ENCODE measurements at regions of chr2 and their contacts with region 1.

Region 1: GRCh38 chr2:84865181-84865783 is 15.6 kb downstream of the TRABD2A start:
- DNase-seq: peak in 5 of 9 donors; percentile 43 to 67 (median 53)
- ATAC-seq: peak; percentile 72
- H3K4me3 ChIP-seq: no peak overlapping the region
- H3K4me3 Mint-ChIP-seq: peak overlapping the region; percentile 32 to 89 (median 74)
- H3K27ac ChIP-seq: peak overlapping the region; percentile 73
- H3K27ac Mint-ChIP-seq: peak overlapping the region; percentile 70 to 99 (median 96)
- H3K4me1 ChIP-seq: peaks cover 12 to 74% of the 10 kb centered on the region in 2 donors
- H3K4me1 Mint-ChIP-seq: peaks cover 51 to 97% (median 91%) of the 10 kb centered on the region in 7 donors
- H3K27me3 ChIP-seq: no peaks in the 10 kb centered on the region
- H3K27me3 Mint-ChIP-seq: no peaks in the 10 kb centered on the region

Region 2: DNA sequence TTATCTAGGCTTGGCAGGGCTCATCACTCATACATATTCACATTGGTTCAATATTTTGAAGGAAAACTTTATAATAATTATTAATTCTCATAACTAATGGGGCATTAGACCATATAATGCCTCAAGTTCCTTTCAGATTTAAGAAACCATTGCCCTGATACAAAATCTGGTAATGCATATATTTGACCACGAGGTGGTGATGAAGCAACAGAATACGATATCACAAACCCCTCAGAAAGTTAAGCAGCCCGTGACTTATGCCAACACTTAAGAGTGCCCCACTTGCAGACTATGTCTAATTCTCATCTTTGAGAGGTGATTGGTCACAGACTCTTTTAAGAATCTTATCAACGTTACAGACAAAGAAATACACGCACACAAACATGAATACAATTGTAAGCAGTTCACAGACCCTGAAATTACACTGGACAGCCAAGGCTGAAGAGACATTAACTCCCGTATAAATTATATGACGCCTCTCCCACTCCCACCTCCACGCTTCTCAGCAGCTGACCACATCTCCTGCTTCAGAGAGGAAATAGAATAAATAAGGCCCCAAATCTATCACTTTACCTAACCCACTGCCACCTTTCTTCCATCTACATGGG is 369.6 kb before region 1 on chr2:
- CTCF ChIA-PET with region 1: interaction called, 5 read pairs
- POLR2A ChIA-PET with region 1: interaction called, 9 read pairs
- intact Hi-C with region 1: loop called (anchors 1 kb)
- DNase-seq: peak in 7 of 9 donors; percentile 61 to 81 (median 73)
- ATAC-seq: peak; percentile 96
- H3K4me3 ChIP-seq: no peak overlapping the region
- H3K4me3 Mint-ChIP-seq: peak overlapping the region in 1 of 10 donors; percentile 23
- H3K27ac ChIP-seq: no peak overlapping the region
- H3K27ac Mint-ChIP-seq: peak overlapping the region in 7 of 9 donors; percentile 35 to 82 (median 76)
- H3K4me1 ChIP-seq: peaks cover 0 to 5% of the 10 kb centered on the region in 2 donors
- H3K4me1 Mint-ChIP-seq: peaks cover 9 to 31% (median 28%) of the 10 kb centered on the region in 7 donors
- H3K27me3 ChIP-seq: no peaks in the 10 kb centered on the region
- H3K27me3 Mint-ChIP-seq: peaks cover 0 to 14% (median 0%) of the 10 kb centered on the region in 5 donors

Region 3: DNA sequence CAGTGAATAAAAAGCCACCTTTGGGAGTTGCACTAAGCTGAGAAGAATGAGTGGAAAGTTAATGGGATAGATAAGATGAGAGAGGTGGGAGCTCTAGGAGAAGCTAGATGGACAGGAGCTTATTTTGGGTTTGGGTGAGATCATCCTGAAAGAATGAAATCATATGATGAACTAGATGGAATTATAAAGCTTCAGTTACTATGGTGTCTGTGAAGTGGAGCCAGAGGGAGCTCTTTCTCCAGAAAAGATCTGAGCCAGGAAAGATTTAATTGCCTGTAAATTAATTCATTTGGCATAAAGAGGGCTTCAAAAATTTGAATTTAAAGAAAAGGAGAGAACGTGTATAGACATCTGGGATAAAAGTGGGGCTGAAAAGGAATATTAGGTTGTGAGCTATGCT is 338.7 kb before region 1 on chr2:
- CTCF ChIA-PET with region 1: interaction called, 10 read pairs
- POLR2A ChIA-PET with region 1: no interaction called
- intact Hi-C with region 1: loop called (anchors 1 kb)
- DNase-seq: peak in 3 of 9 donors; percentile 32 to 45 (median 35)
- ATAC-seq: no peak
- H3K4me3 ChIP-seq: no peak overlapping the region
- H3K4me3 Mint-ChIP-seq: peak overlapping the region in 6 of 10 donors; percentile 17 to 46 (median 30)
- H3K27ac ChIP-seq: no peak overlapping the region
- H3K27ac Mint-ChIP-seq: peak overlapping the region in 8 of 9 donors; percentile 0 to 82 (median 53)
- H3K4me1 ChIP-seq: peaks cover 0 to 9% of the 10 kb centered on the region in 2 donors
- H3K4me1 Mint-ChIP-seq: peaks cover 2 to 36% (median 28%) of the 10 kb centered on the region in 7 donors
- H3K27me3 ChIP-seq: no peaks in the 10 kb centered on the region
- H3K27me3 Mint-ChIP-seq: peaks cover 0 to 16% (median 0%) of the 10 kb centered on the region in 5 donors

Region 4: GRCh38 chr2:84741296-84741765 is 124.0 kb before region 1 on chr2:
- CTCF ChIA-PET with region 1: interaction called, 8 read pairs
- POLR2A ChIA-PET with region 1: interaction called, 5 read pairs
- intact Hi-C with region 1: loop called (anchors 1 to 2 kb)
- DNase-seq: peak in 8 of 9 donors; percentile 14 to 43 (median 28)
- ATAC-seq: peak; percentile 94
- H3K4me3 ChIP-seq: no peak overlapping the region
- H3K4me3 Mint-ChIP-seq: peak overlapping the region in 4 of 10 donors; percentile 5 to 30 (median 23)
- H3K27ac ChIP-seq: no peak overlapping the region
- H3K27ac Mint-ChIP-seq: peak overlapping the region in 6 of 9 donors; percentile 7 to 71 (median 38)
- H3K4me1 ChIP-seq: peaks cover 14 to 17% of the 10 kb centered on the region in 2 donors
- H3K4me1 Mint-ChIP-seq: peaks cover 12 to 75% (median 51%) of the 10 kb centered on the region in 7 donors
- H3K27me3 ChIP-seq: no peaks in the 10 kb centered on the region
- H3K27me3 Mint-ChIP-seq: peaks cover 0 to 21% (median 0%) of the 10 kb centered on the region in 5 donors

Region 5: DNA sequence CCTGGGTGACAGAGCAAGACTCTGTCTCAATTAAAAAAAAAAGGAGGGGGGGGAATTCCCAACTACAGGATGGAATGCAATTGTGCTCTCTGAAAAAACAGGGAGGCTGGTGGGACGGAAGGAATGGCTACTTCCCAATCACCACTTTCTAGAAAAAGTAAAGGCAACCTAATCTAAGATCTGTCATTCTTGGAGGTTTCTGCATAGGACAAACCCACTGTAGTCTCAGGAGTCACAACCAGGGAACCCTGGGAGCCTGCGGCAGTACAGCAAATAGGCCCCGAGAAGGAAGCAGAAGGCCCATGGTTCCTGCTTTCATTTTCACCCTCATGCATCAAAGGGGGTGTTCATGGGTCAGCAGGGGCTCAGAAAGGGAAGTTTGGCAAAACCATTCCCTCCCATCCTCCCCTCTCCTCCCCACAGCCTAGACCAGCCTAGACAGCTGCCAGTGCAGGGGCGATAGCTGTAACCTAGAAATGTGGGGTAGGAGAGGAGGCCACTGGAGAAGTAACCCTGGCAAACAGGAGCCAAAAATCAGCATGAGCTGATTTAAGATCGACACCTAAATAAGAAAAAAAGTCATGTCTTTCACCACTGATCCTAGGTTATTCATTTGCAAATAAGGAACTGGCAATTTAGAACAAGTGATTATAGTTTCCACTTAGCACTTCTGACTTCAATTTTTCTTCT is 32.4 kb before region 1 on chr2:
- CTCF ChIA-PET with region 1: interaction called, 4 read pairs
- POLR2A ChIA-PET with region 1: interaction called, 9 read pairs
- intact Hi-C with region 1: loop called in 1 of 2 experiments (anchors 1 kb)
- DNase-seq: no peak
- ATAC-seq: peak; percentile 64
- H3K4me3 ChIP-seq: peak overlapping the region; percentile 50
- H3K4me3 Mint-ChIP-seq: peak overlapping the region in 7 of 10 donors; percentile 74 to 89 (median 79)
- H3K27ac ChIP-seq: peak overlapping the region; percentile 79
- H3K27ac Mint-ChIP-seq: peak overlapping the region in 1 of 9 donors; percentile 92
- H3K4me1 ChIP-seq: peaks cover 36 to 93% of the 10 kb centered on the region in 2 donors
- H3K4me1 Mint-ChIP-seq: peaks cover 18 to 46% (median 26%) of the 10 kb centered on the region in 7 donors
- H3K27me3 ChIP-seq: no peaks in the 10 kb centered on the region
- H3K27me3 Mint-ChIP-seq: no peaks in the 10 kb centered on the region

Region 6: DNA sequence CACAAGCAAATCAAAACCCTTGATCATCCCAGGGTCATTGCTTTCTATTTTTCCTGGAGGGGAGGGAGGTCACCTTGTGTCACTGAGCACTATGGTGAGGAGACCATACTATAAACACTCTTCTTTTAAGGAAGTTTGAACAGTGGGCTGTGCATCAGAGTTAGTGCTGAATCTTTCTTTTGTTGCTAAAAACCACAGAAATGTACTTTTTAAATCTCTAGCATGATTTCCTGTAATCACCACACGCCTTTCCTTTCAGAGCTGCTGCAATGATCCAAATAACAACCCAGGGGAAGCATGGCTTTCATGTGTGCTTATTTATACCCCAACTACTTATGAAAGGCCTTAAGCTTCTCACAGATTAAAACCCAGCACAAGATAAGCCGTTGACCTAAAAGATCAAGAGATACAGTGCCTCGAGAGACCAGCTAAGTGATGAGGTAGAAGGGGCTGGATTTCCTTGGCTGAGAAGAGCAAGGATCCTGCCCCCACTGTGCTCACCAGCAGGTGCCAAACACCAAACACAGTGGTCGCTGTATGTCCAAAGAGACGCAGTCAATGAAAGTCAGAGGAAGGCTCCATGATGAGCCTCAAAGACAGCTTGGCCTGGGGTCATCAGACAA is 19.1 kb before region 1 on chr2:
- CTCF ChIA-PET with region 1: interaction called, 21 read pairs
- POLR2A ChIA-PET with region 1: interaction called, 261 read pairs
- intact Hi-C with region 1: loop called (anchors 1 to 2 kb)
- DNase-seq: peak in 7 of 9 donors; percentile 68 to 89 (median 84)
- ATAC-seq: peak; percentile 85
- H3K4me3 ChIP-seq: peak overlapping the region; percentile 14
- H3K4me3 Mint-ChIP-seq: peak overlapping the region; percentile 72 to 87 (median 82)
- H3K27ac ChIP-seq: peak overlapping the region; percentile 80
- H3K27ac Mint-ChIP-seq: peak overlapping the region in 8 of 9 donors; percentile 94 to 99 (median 97)
- H3K4me1 ChIP-seq: peaks cover 93 to 98% of the 10 kb centered on the region in 2 donors
- H3K4me1 Mint-ChIP-seq: peaks cover 77 to 100% (median 92%) of the 10 kb centered on the region in 7 donors
- H3K27me3 ChIP-seq: no peaks in the 10 kb centered on the region
- H3K27me3 Mint-ChIP-seq: no peaks in the 10 kb centered on the region

Region 7: GRCh38 chr2:85011747-85012146 is 146.5 kb after region 1 on chr2:
- CTCF ChIA-PET with region 1: no interaction called
- POLR2A ChIA-PET with region 1: no interaction called
- intact Hi-C with region 1: loop called in 1 of 2 experiments (anchors 5 kb)
- DNase-seq: no peak
- ATAC-seq: no peak
- H3K4me3 ChIP-seq: no peak overlapping the region
- H3K4me3 Mint-ChIP-seq: peak overlapping the region in 7 of 10 donors; percentile 18 to 40 (median 35)
- H3K27ac ChIP-seq: peak overlapping the region; percentile 15
- H3K27ac Mint-ChIP-seq: peak overlapping the region; percentile 26 to 92 (median 56)
- H3K4me1 ChIP-seq: peaks cover 3 to 25% of the 10 kb centered on the region in 2 donors
- H3K4me1 Mint-ChIP-seq: peaks cover 65 to 86% (median 78%) of the 10 kb centered on the region in 7 donors
- H3K27me3 ChIP-seq: no peaks in the 10 kb centered on the region
- H3K27me3 Mint-ChIP-seq: no peaks in the 10 kb centered on the region

Region 8: DNA sequence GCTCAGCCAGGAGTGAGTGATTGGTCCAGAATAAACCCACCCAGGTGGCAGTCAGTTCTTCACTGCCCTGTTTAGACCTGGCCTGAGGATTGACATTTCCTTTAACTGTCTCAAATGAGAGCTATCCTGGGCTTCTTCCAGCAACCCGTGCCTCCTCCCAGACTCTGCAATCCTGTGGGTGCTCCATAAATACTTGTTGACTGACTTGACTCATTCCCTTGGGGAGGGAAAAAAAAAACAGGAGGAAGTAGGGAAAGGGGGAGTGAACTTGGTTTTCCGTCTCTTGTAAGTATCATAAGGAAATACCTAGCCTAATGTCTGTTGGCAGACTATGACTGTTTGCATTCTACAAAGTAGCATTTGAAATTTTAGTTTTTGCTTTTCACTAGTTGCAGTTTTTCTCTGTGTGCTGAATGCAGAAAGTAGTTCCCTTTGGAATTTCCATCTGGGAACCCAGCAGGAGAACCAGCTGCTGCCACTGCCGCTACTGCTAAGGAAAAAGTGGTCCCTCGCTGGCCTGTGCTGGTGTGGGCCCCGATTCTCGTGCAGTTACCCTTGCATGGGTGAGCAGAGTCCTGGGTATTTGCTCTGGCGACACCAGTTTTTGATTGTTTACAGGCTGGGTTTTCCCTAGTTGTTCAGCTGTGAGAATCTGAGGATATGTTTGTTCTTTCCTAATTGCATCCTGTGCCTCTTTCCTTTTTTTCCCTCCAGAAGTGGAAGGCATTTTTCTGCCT is 383.7 kb after region 1 on chr2:
- CTCF ChIA-PET with region 1: no interaction called
- POLR2A ChIA-PET with region 1: no interaction called
- intact Hi-C with region 1: no loop called
- DNase-seq: no peak
- ATAC-seq: no peak
- H3K4me3 ChIP-seq: no peak overlapping the region
- H3K4me3 Mint-ChIP-seq: no peak overlapping the region
- H3K27ac ChIP-seq: no peak overlapping the region
- H3K27ac Mint-ChIP-seq: no peak overlapping the region
- H3K4me1 ChIP-seq: no peaks in the 10 kb centered on the region
- H3K4me1 Mint-ChIP-seq: peaks cover 0 to 2% (median 0%) of the 10 kb centered on the region in 7 donors
- H3K27me3 ChIP-seq: no peaks in the 10 kb centered on the region
- H3K27me3 Mint-ChIP-seq: peaks cover 0 to 13% (median 7%) of the 10 kb centered on the region in 5 donors

Measured in naive thymus-derived CD4-positive, alpha-beta T cell (primary cell).